Pancreas (tissue), 10 donors: ENCODE measurements at regions of chr10 and their contacts with region 1.

Region 1: GRCh38 chr10:124539935-124540641 is 78.5 kb downstream of the LHPP start:
- DNase-seq: peak in 3 of 6 donors; percentile 38 to 79 (median 78)
- ATAC-seq: peak in 3 of 4 donors; percentile 80 to 87 (median 86)
- H3K4me3 ChIP-seq: no peak overlapping the region
- H3K27ac ChIP-seq: no peak overlapping the region
- H3K4me1 ChIP-seq: no peaks in the 10 kb centered on the region
- H3K27me3 ChIP-seq: no peaks in the 10 kb centered on the region
- CTCF ChIP-seq: peak; percentile 11 to 48 (median 36)

Region 2: GRCh38 chr10:124461438-124462347 is 78.4 kb before region 1 on chr10 and contains the start of gene LHPP:
- intact Hi-C with region 1: no loop called
- DNase-seq: peak; percentile 83 to 94 (median 86)
- ATAC-seq: peak; percentile 98 to 99 (median 98)
- H3K4me3 ChIP-seq: peak within 1 kb of the TSS; percentile 51 to 89 (median 62)
- H3K27ac ChIP-seq: peak within 1 kb of the TSS; percentile 17 to 74 (median 64)
- H3K4me1 ChIP-seq: peaks cover 0 to 3% (median 0%) of the 10 kb centered on the region in 3 donors
- H3K27me3 ChIP-seq: no peaks in the 10 kb centered on the region
- CTCF ChIP-seq: peak; percentile 23 to 58 (median 34)
- total RNA-seq, gene LHPP: 5.3 to 8.1 (median 6.9) TPM

Region 3: DNA sequence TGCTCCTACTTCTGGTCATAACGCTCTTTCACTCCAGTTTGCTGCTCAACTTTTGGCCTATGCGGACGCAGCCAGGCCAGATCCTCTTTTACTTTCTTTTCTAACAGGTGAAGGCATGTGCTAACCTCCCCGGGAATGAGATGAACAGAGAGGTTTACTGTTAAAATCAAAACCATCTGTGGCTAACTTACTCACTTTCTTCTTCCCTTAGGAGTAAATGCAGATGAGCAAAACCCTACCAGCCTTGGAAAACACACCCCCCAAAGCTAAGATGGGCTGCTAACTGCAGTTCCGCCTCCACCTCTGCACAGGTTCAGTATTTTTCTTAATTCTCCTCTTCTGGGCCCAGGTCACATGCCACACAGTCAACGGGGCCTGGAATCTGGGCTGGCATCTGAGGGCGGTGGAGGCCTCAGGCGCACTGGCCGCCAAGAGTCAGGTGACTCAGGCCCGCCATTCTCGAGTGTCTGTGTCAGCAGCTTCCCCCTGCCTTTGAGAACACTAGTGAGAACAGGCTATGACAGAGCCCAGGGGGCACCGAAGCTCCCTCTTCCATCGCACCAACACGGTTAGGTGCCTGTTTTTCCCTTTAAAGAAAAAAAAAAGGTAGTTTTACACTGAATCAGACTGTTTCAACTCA is 193.0 kb after region 1 on chr10:
- intact Hi-C with region 1: loop called in 1 of 3 experiments (anchors 10 kb)
- DNase-seq: no peak
- ATAC-seq: no peak
- H3K4me3 ChIP-seq: no peak overlapping the region
- H3K27ac ChIP-seq: no peak overlapping the region
- H3K4me1 ChIP-seq: peaks cover 12 to 25% (median 19%) of the 10 kb centered on the region in 3 donors
- H3K27me3 ChIP-seq: no peaks in the 10 kb centered on the region
- CTCF ChIP-seq: no peak

Region 4: GRCh38 chr10:124741281-124741921 is 201.3 kb after region 1 on chr10:
- intact Hi-C with region 1: loop called in 2 of 3 experiments (anchors 5 to 10 kb)
- DNase-seq: peak; percentile 66 to 83 (median 70)
- ATAC-seq: peak; percentile 44 to 73 (median 58)
- H3K4me3 ChIP-seq: no peak overlapping the region
- H3K27ac ChIP-seq: peak overlapping the region in 3 of 4 donors; percentile 13 to 75 (median 73)
- H3K4me1 ChIP-seq: peaks cover 18 to 65% (median 37%) of the 10 kb centered on the region in 3 donors
- H3K27me3 ChIP-seq: no peaks in the 10 kb centered on the region
- CTCF ChIP-seq: peak; percentile 67 to 70 (median 70)